ENCODE measurements at regions of chr12 and their contacts with region 1.

Region 1: GRCh38 chr12:130838951-130839769 is at the start of gene STX2:
- DNase-seq: peak; percentile 81 to 93
- ATAC-seq: peak; percentile 97
- H3K4me3 ChIP-seq: peak within 1 kb of the TSS; percentile 58
- H3K4me3 Mint-ChIP-seq: peak within 1 kb of the TSS; percentile 84
- H3K27ac ChIP-seq: no peak within 1 kb of the TSS
- H3K27ac Mint-ChIP-seq: peak within 1 kb of the TSS in 1 of 2 donors; percentile 72
- H3K4me1 ChIP-seq: peaks cover 20% of the 10 kb centered on the region
- H3K4me1 Mint-ChIP-seq: peaks cover 7 to 16% of the 10 kb centered on the region in 2 donors
- H3K27me3 ChIP-seq: no peaks in the 10 kb centered on the region
- H3K27me3 Mint-ChIP-seq: no peaks in the 10 kb centered on the region
- CTCF ChIP-seq: no peak
- total RNA-seq, gene STX2: 7.9 to 14.4 (median 14.1) TPM

Region 2: GRCh38 chr12:130796985-130797686 is 42.0 kb before region 1 on chr12:
- intact Hi-C with region 1: no loop called
- DNase-seq: peak in 1 of 2 donors; percentile 74
- ATAC-seq: peak; percentile 79 to 93 (median 91)
- H3K4me3 ChIP-seq: peak overlapping the region; percentile 16
- H3K4me3 Mint-ChIP-seq: peak overlapping the region; percentile 72
- H3K27ac ChIP-seq: peak overlapping the region; percentile 76
- H3K27ac Mint-ChIP-seq: peak overlapping the region; percentile 70 to 89
- H3K4me1 ChIP-seq: peaks cover 4% of the 10 kb centered on the region
- H3K4me1 Mint-ChIP-seq: no peaks in the 10 kb centered on the region
- H3K27me3 ChIP-seq: no peaks in the 10 kb centered on the region
- H3K27me3 Mint-ChIP-seq: no peaks in the 10 kb centered on the region
- CTCF ChIP-seq: no peak

Region 3: GRCh38 chr12:130871286-130872178 is 32.4 kb after region 1 on chr12 and contains the start of gene RAN:
- intact Hi-C with region 1: loop called (anchors 2 kb)
- DNase-seq: peak; percentile 81 to 98
- ATAC-seq: peak; percentile 80 to 94 (median 84)
- H3K4me3 ChIP-seq: peak within 1 kb of the TSS; percentile 73
- H3K4me3 Mint-ChIP-seq: peak within 1 kb of the TSS; percentile 90
- H3K27ac ChIP-seq: peak within 1 kb of the TSS; percentile 78
- H3K27ac Mint-ChIP-seq: peak within 1 kb of the TSS; percentile 84 to 85
- H3K4me1 ChIP-seq: peaks cover 17% of the 10 kb centered on the region
- H3K4me1 Mint-ChIP-seq: peaks cover 21 to 32% of the 10 kb centered on the region in 2 donors
- H3K27me3 ChIP-seq: no peaks in the 10 kb centered on the region
- H3K27me3 Mint-ChIP-seq: no peaks in the 10 kb centered on the region
- CTCF ChIP-seq: no peak
- total RNA-seq, gene RAN: 244 to 264 (median 247) TPM